Dendritic cell treated with granulocyte-macrophage colony-stimulating factor and Interleukin-4, amounts not matched to agents 40 ng/mL and 50 ng/mL, for 4 days (primary cell): ENCODE measurements at regions of chr5 and their contacts with region 1.

Region 1: GRCh38 chr5:74648835-74649293 is 8.3 kb upstream of the ENC1 start:
- H3K4me3 Mint-ChIP-seq: no peak overlapping the region
- H3K27ac Mint-ChIP-seq: no peak overlapping the region
- H3K4me1 Mint-ChIP-seq: peaks cover 6% of the 10 kb centered on the region
- H3K27me3 Mint-ChIP-seq: no peaks in the 10 kb centered on the region

Region 2: DNA sequence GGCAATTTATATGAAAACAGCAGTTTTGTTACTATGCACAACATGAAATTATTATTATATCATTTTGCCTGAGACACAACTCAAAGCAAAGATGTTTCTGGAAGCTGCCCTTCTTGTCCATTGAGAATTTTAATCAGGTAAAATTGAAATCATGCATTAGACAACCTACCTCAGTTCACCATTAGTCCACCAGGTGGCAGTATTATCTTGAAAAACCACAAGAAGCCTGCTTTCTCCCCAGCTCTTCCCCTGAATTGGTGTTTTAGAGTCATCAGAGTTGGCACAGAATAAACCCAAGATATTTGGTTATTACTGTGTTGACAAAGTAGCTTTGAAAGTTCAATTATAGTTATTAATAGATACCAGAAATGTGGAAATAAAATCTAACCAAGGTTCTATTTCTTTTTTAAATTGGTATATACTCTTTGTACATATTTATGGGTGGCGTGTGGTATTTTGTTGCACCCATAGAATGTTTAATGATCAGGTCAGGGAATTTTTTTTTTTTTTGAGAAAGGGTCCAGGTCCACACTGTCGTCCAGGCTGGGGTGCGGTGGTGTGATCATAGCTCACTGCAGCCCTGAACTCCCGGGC is 1057.7 kb before region 1 on chr5:
- intact Hi-C with region 1: loop called (anchors 5 kb)
- H3K4me3 Mint-ChIP-seq: no peak overlapping the region
- H3K27ac Mint-ChIP-seq: no peak overlapping the region
- H3K4me1 Mint-ChIP-seq: no peaks in the 10 kb centered on the region
- H3K27me3 Mint-ChIP-seq: no peaks in the 10 kb centered on the region

Region 3: GRCh38 chr5:73902327-73903051 is 746.4 kb before region 1 on chr5:
- intact Hi-C with region 1: loop called (anchors 1 kb)
- H3K4me3 Mint-ChIP-seq: no peak overlapping the region
- H3K27ac Mint-ChIP-seq: no peak overlapping the region
- H3K4me1 Mint-ChIP-seq: peaks cover 20% of the 10 kb centered on the region
- H3K27me3 Mint-ChIP-seq: no peaks in the 10 kb centered on the region

Region 4: GRCh38 chr5:74035521-74035981 is 613.3 kb before region 1 on chr5:
- intact Hi-C with region 1: loop called (anchors 2 kb)
- H3K4me3 Mint-ChIP-seq: no peak overlapping the region
- H3K27ac Mint-ChIP-seq: no peak overlapping the region
- H3K4me1 Mint-ChIP-seq: peaks cover 5% of the 10 kb centered on the region
- H3K27me3 Mint-ChIP-seq: no peaks in the 10 kb centered on the region

Region 5: DNA sequence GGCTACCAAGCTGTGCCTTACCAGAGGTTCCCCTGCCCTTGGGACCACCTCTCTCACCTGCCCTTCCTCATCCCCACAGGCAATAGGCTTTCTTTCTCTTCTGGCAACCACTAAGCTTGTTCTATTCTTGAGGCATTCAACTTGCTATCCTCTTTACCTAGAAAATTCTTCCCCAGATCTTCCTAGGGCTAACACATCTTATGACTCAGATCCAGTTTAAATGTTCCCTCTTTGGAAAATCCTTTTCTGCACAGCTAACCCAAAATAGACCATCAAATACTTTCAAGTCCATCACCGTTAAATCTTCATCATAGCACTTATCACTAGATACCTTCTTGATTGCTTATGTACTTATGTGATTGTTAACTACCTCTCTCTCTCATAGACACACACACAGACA is 102.1 kb before region 1 on chr5:
- intact Hi-C with region 1: no loop called
- H3K4me3 Mint-ChIP-seq: no peak overlapping the region
- H3K27ac Mint-ChIP-seq: no peak overlapping the region
- H3K4me1 Mint-ChIP-seq: peaks cover 12% of the 10 kb centered on the region
- H3K27me3 Mint-ChIP-seq: peaks cover 6% of the 10 kb centered on the region